ENCODE measurements at regions of chr3 and their contacts with region 1.

Region 1: GRCh38 chr3:123028233-123028828 is 768 bp upstream of the SEMA5B start:
- DNase-seq: no peak
- H3K4me3 ChIP-seq: peak overlapping the region; percentile 43 to 75 (median 52)
- H3K27ac ChIP-seq: peak overlapping the region in 2 of 4 donors; percentile 46 to 56
- H3K4me1 ChIP-seq: peaks cover 9 to 36% (median 23%) of the 10 kb centered on the region in 3 donors
- H3K27me3 ChIP-seq: peaks cover 8 to 91% (median 16%) of the 10 kb centered on the region in 4 donors
- CTCF ChIP-seq: peak; percentile 15 to 43 (median 35)
- POLR2A ChIP-seq: no peak

Region 2: DNA sequence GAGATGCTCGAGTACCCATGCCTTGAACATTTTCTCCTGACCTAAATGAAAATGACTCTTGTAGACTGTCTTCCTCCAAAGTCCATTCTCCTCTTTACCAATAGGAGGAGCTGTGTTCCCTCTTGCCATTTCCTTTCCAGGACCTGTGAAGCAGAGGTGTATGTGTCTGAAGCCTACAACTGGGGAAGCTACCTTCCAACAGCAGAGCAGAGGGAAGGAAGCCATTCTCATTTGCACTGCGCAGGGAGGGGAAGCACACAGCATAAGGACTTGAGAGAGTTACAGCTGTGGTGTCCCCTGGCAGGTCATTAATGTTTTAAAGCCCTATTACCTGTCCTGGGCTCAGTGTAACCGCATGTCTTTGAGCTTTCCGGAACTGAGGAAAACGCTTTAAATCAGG is 273.4 kb before region 1 on chr3:
- intact Hi-C with region 1: loop called (anchors 10 kb)
- DNase-seq: no peak
- H3K4me3 ChIP-seq: no peak overlapping the region
- H3K27ac ChIP-seq: no peak overlapping the region
- H3K4me1 ChIP-seq: peaks cover 0 to 5% (median 0%) of the 10 kb centered on the region in 3 donors
- H3K27me3 ChIP-seq: no peaks in the 10 kb centered on the region
- CTCF ChIP-seq: peak; percentile 38 to 81 (median 61)
- POLR2A ChIP-seq: no peak

Region 3: DNA sequence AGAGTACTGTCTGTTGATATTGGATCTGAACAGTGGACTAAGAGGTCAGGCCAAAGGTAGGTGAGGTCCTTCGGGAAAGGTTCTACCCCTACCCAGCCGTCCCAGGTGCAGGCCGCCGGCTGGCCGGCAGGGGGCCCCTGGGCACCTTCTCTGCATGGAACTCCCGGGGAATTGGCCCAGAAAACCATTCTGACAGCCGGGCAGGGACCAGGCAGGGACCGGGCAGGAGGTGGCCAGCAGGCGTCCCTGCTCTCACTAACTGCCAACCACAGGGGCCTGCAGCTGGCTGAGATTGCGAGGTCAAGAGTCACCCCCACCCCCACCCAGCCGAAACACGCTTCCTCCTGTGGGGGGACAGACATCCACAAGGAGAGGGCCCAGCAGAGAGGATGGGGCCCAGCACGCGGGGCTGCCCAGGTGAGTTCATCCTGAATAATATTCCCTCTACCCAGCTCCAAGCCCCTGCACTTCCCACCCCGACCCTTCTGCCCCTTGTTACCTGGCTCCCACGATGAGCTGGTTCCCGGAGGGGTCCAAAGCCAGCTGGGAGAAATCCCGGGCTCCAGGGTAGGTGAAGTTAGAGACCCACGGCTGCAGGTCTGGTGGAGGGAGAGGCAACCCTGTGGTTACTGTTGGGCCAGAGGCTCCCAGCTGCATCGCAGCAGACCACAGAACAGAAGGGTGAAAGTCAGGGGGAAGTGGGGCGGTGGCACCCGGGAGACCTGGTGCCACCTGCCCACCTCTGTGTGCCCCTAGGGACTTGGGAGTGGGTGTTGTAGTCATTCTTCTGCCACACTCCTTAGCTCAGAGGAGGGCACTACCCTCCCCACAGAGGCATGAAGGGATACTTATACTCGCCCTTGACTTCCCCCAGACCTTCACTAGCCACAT is 85.1 kb before region 1 on chr3:
- intact Hi-C with region 1: loop called (anchors 10 kb)
- DNase-seq: no peak
- H3K4me3 ChIP-seq: no peak overlapping the region
- H3K27ac ChIP-seq: no peak overlapping the region
- H3K4me1 ChIP-seq: peaks cover 0 to 39% (median 0%) of the 10 kb centered on the region in 3 donors
- H3K27me3 ChIP-seq: peaks cover 0 to 16% (median 0%) of the 10 kb centered on the region in 4 donors
- CTCF ChIP-seq: peak; percentile 46 to 86 (median 80)
- POLR2A ChIP-seq: no peak

Region 4: DNA sequence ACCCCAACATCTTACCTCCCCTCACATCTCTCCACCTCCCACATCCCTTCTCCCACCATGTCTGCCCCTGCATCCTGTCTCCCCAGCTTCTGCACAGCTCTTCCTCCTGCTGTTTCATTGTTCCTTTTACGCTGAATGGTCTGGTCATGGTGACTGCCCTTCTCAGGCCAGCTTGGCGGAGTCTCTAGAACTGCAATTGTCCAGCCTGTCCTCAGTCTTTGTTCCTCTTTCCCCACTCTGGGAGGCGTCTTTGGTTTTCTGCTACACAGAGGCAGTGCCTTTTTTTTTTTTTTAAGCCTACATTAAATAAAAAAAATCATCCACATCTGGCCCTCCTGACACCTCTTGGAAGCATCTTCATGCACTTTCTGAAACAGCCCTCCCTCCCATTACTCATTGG is 124.4 kb after region 1 on chr3:
- intact Hi-C with region 1: no loop called
- DNase-seq: no peak
- H3K4me3 ChIP-seq: no peak overlapping the region
- H3K27ac ChIP-seq: no peak overlapping the region
- H3K4me1 ChIP-seq: no peaks in the 10 kb centered on the region
- H3K27me3 ChIP-seq: no peaks in the 10 kb centered on the region
- CTCF ChIP-seq: no peak
- POLR2A ChIP-seq: no peak

Region 5: GRCh38 chr3:123218990-123219389 is 190.7 kb after region 1 on chr3:
- intact Hi-C with region 1: no loop called
- DNase-seq: no peak
- H3K4me3 ChIP-seq: no peak overlapping the region
- H3K27ac ChIP-seq: no peak overlapping the region
- H3K4me1 ChIP-seq: no peaks in the 10 kb centered on the region
- H3K27me3 ChIP-seq: no peaks in the 10 kb centered on the region
- CTCF ChIP-seq: no peak
- POLR2A ChIP-seq: no peak

Measured in esophagus squamous epithelium (tissue), 5 donors.